CD4-positive, alpha-beta T cell (primary cell): ENCODE measurements at regions of chr16 and their contacts with region 1.

Region 1: DNA sequence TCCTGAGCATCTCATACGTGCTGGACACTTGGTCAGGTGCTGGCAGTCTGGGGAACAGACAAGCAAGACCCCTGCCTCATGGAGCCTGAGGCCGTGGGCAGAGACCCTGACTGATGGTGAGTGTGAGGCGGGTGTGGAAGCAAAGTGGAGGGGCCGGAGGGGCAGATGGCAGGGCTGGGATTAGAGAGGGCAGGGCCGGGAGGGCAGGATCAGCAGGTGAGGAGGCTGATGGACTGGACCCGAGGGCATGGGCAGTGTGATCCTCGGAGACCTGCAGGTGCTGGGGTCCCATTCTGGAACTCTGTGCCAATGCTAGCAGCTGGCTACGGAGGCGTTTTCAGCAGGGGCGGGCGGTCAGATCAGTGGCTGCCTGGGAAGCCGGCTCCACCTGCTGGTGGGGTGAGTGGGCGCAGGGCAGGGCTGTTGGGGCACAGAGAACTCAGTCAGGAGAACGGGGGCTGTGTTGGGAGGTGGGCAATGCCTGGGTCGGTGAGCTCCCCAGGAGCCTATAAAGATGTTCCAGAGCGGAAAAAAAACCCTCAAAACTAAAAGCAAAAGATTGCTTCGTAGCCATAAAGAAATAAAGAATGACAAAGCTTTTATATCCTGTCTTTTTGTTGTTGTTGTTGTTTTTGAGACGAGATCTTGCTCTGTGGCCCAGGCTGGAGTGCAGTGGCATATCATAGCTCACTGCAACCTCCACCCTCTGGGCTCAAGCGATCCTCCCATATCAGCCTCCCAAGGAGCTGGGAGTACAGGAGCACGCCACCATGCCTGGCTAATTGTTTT is 8.9 kb upstream of the C16orf74 start:
- DNase-seq: peak in 9 of 14 experiments; percentile 6 to 51 (median 17)
- ATAC-seq: no peak
- H3K4me3 ChIP-seq: no peak overlapping the region
- H3K4me3 Mint-ChIP-seq: no peak overlapping the region
- H3K27ac ChIP-seq: no peak overlapping the region
- H3K27ac Mint-ChIP-seq: no peak overlapping the region
- H3K4me1 ChIP-seq: peaks cover 11% of the 10 kb centered on the region
- H3K4me1 Mint-ChIP-seq: peaks cover 8% of the 10 kb centered on the region
- H3K27me3 ChIP-seq: peaks cover 0 to 10% of the 10 kb centered on the region in 2 experiments
- H3K27me3 Mint-ChIP-seq: peaks cover 27% of the 10 kb centered on the region
- CTCF ChIP-seq: peak; percentile 39

Region 2: DNA sequence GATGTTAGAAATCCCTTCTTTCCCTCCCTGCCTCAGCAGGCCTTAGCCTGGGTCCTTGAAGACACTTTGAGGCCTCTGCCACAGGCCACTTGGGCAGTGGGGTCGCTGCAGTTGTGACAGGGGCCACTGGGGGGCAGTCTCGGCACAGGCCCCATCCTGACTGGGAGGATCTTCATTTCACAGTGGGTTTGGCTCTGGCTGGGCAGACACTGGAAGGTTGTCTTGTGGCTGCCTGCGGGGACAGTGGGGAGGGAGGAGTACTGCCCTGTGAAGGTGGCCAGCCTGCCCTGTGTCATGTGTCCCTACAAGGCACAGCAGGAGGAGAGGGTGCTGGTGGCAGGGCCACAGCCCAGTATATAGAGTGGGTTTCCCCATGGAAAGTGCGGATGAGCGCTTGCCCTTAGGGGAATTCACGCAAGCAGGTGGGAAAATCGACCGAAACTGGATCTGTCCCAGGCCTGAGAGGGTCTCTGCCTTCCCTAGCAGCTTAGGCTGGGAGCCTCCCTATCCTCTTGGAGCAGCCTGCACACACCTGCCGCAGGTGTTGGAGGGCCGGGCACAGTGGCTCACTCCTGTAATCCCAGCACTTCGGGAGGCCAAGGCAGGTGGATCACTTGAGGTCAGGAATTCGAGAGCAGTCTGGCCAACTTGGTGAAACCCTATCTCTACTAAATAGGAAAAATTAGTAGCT is 99.9 kb before region 1 on chr16:
- CTCF ChIA-PET with region 1: no interaction called
- POLR2A ChIA-PET with region 1: no interaction called
- intact Hi-C with region 1: loop called in 1 of 2 experiments (anchors 2 kb)
- DNase-seq: peak; percentile 38 to 71 (median 54)
- ATAC-seq: peak; percentile 74
- H3K4me3 ChIP-seq: no peak overlapping the region
- H3K4me3 Mint-ChIP-seq: no peak overlapping the region
- H3K27ac ChIP-seq: no peak overlapping the region
- H3K27ac Mint-ChIP-seq: no peak overlapping the region
- H3K4me1 ChIP-seq: no peaks in the 10 kb centered on the region
- H3K4me1 Mint-ChIP-seq: no peaks in the 10 kb centered on the region
- H3K27me3 ChIP-seq: no peaks in the 10 kb centered on the region
- H3K27me3 Mint-ChIP-seq: no peaks in the 10 kb centered on the region
- CTCF ChIP-seq: peak; percentile 77

Region 3: DNA sequence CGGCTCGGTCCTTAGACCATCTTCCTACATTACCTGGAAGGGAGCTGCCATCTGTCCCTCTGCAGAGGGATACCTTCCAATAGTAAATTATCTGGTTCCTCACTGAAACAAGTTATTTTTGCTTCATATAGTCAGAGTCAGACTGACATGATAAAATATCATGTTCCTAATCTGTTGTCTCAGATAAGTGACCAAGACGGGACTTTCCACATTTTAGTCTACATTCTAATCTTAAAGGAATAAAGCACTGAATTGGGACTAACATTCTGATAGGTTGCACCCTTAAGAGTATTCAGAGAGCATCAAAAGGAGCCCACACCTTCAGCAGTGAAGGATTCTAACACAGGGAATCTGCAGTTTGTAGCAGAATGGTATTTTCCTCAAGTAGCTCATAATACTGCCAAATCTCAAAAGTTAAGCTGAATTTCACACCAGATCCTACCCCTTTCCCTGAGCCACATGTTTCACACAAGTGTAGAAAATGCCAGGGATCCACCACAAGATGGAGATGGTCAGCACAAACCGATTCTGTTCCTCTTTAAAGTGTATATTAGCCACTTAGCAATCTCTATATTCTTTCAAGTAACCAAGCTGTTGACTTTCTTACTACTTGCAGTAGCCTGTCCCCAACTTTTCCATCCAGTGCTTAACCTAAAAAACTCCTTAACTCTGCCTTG is 84.4 kb before region 1 on chr16:
- CTCF ChIA-PET with region 1: no interaction called
- POLR2A ChIA-PET with region 1: no interaction called
- intact Hi-C with region 1: loop called in 1 of 2 experiments (anchors 5 kb)
- DNase-seq: no peak
- ATAC-seq: no peak
- H3K4me3 ChIP-seq: no peak overlapping the region
- H3K4me3 Mint-ChIP-seq: no peak overlapping the region
- H3K27ac ChIP-seq: no peak overlapping the region
- H3K27ac Mint-ChIP-seq: no peak overlapping the region
- H3K4me1 ChIP-seq: peaks cover 6% of the 10 kb centered on the region
- H3K4me1 Mint-ChIP-seq: peaks cover 3% of the 10 kb centered on the region
- H3K27me3 ChIP-seq: no peaks in the 10 kb centered on the region
- H3K27me3 Mint-ChIP-seq: no peaks in the 10 kb centered on the region
- CTCF ChIP-seq: no peak

Region 4: DNA sequence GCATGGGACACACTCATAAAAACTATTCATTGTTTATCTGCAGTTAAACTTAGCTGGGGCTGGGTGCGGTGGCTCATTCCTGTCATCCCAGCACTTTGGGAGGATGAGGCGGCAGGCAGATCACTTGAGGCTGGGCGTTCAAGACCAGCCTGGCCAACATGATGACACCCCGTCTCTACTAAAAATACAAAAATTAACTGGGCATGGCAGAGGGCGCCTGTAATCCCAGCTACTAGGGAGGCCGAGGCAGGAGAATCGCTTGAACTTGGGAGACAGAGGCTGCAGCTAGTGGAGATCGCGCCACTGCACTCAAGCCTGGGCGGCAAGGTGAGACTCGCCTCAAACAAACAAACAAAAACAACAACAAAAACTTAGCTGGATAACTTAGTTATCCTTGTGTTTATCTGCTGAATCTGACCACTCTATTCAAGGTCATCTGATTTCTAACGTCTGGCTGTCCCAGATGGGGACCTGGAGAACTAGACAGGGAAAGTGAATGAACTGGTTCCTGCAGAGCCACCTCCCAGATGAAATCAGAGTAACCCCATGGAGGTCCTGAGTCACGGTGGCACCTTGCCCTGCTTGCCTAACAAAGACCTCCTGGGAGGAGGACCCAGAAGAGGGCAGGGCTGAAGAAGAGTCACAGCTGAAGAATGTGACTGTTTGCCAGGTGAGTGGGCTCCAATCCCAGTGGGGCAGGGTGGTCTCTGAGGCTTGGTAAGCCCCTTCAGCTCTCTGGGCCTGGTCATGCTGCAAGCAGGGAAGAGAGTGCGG is 13.6 kb before region 1 on chr16:
- CTCF ChIA-PET with region 1: no interaction called
- POLR2A ChIA-PET with region 1: no interaction called
- intact Hi-C with region 1: no loop called
- DNase-seq: no peak
- ATAC-seq: no peak
- H3K4me3 ChIP-seq: no peak overlapping the region
- H3K4me3 Mint-ChIP-seq: no peak overlapping the region
- H3K27ac ChIP-seq: no peak overlapping the region
- H3K27ac Mint-ChIP-seq: no peak overlapping the region
- H3K4me1 ChIP-seq: peaks cover 12% of the 10 kb centered on the region
- H3K4me1 Mint-ChIP-seq: peaks cover 5% of the 10 kb centered on the region
- H3K27me3 ChIP-seq: peaks cover 13 to 17% of the 10 kb centered on the region in 2 experiments
- H3K27me3 Mint-ChIP-seq: peaks cover 15% of the 10 kb centered on the region
- CTCF ChIP-seq: no peak

Region 5: GRCh38 chr16:86044241-86044671 is 284.4 kb after region 1 on chr16:
- CTCF ChIA-PET with region 1: no interaction called
- POLR2A ChIA-PET with region 1: no interaction called
- intact Hi-C with region 1: no loop called
- DNase-seq: peak in 13 of 14 experiments; percentile 1 to 63 (median 19)
- ATAC-seq: no peak
- H3K4me3 ChIP-seq: no peak overlapping the region
- H3K4me3 Mint-ChIP-seq: no peak overlapping the region
- H3K27ac ChIP-seq: no peak overlapping the region
- H3K27ac Mint-ChIP-seq: no peak overlapping the region
- H3K4me1 ChIP-seq: peaks cover 26% of the 10 kb centered on the region
- H3K4me1 Mint-ChIP-seq: peaks cover 21% of the 10 kb centered on the region
- H3K27me3 ChIP-seq: peaks cover 9 to 12% of the 10 kb centered on the region in 2 experiments
- H3K27me3 Mint-ChIP-seq: peaks cover 61% of the 10 kb centered on the region
- CTCF ChIP-seq: peak; percentile 33